Lower leg skin (tissue), 4 donors: ENCODE measurements at regions of chr4 and their contacts with region 1.

Region 1: DNA sequence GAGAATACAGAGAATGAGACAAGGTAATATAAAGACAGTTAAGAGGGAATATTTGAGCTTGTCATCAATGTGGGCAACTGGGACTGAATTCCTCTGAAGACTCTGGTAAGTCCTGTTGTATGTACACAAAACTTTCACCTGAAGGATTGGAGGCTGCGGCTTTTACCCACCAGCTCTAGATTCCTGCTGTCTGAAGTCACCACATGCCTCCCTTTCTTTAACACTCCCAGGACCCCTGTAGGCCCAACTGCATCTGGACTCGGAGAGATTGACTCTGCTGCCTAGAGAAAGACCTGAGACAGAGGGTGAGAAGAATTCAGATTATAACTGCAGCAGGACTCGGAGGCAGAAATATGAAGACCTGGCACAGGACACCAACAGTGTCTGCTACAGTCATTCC is 1048.0 kb downstream of the PDHA2 start:
- DNase-seq: no peak
- H3K4me3 ChIP-seq: no peak overlapping the region
- CTCF ChIP-seq: no peak
- POLR2A ChIP-seq: no peak

Region 2: GRCh38 chr4:95190751-95191436 is 1697.0 kb before region 1 on chr4:
- intact Hi-C with region 1: loop called (anchors 5 kb)
- DNase-seq: no peak
- H3K4me3 ChIP-seq: no peak overlapping the region
- CTCF ChIP-seq: no peak
- POLR2A ChIP-seq: no peak

Region 3: GRCh38 chr4:97235521-97235920 is 347.7 kb after region 1 on chr4:
- intact Hi-C with region 1: no loop called
- DNase-seq: no peak
- H3K4me3 ChIP-seq: no peak overlapping the region
- CTCF ChIP-seq: no peak
- POLR2A ChIP-seq: no peak